IMR-90 (cell line): ENCODE measurements at regions of chr6 and their contacts with region 1.

Region 1: DNA sequence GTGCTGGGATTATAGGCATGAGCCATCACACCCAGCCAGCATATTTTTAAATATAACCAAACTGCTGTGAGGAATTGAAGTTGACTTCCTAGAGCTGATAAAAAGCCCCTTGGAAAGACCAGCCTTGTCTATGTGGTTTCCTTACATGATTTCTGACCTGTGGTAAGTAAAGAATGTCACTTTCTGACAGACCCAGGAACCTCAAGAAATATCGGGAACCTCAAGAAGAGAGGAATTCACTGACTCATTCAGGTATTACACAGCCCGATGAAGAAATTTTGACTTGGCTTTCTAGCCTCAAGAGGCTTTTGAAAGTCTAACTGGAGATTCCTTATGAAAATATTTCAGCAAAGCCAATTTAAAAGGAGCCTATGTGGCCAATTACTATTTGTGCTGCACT is 71.8 kb downstream of the FOXF2 start:
- DNase-seq: peak; percentile 79
- ATAC-seq: peak; percentile 57
- H3K4me3 ChIP-seq: no peak overlapping the region
- H3K27ac ChIP-seq: no peak overlapping the region
- H3K4me1 ChIP-seq: no peaks in the 10 kb centered on the region; the same call in 1 of the 2 replicates
- H3K27me3 ChIP-seq: peaks cover 3% of the 10 kb centered on the region
- CTCF ChIP-seq: no peak
- POLR2A ChIP-seq: no peak
- RAD21 ChIP-seq: no peak

Region 2: GRCh38 chr6:1503811-1504210 is 42.6 kb after region 1 on chr6:
- CTCF ChIA-PET with region 1: no interaction called
- POLR2A ChIA-PET with region 1: no interaction called
- dilution Hi-C with region 1: no loop called
- in situ Hi-C with region 1: no loop called
- intact Hi-C with region 1: loop called (anchors 1 kb)
- DNase-seq: no peak
- ATAC-seq: no peak
- H3K4me3 ChIP-seq: no peak overlapping the region
- H3K27ac ChIP-seq: no peak overlapping the region
- H3K4me1 ChIP-seq: no peaks in the 10 kb centered on the region
- H3K27me3 ChIP-seq: peaks cover 24% of the 10 kb centered on the region
- CTCF ChIP-seq: no peak
- POLR2A ChIP-seq: no peak
- RAD21 ChIP-seq: no peak